Mammary epithelial cell (primary cell): ENCODE measurements at regions of chr2 and their contacts with region 1.

Region 1: GRCh38 chr2:219498280-219499057 is at the start of gene GMPPA:
- DNase-seq: peak; percentile 98
- H3K4me3 ChIP-seq: peak within 1 kb of the TSS; percentile 57 to 71 (median 65)
- H3K27ac ChIP-seq: peak within 1 kb of the TSS; percentile 53
- H3K4me1 ChIP-seq: peaks cover 18% of the 10 kb centered on the region
- H3K27me3 ChIP-seq: no peaks in the 10 kb centered on the region
- CTCF ChIP-seq: no peak
- total RNA-seq, gene GMPPA: 37.8 to 50.1 TPM

Region 2: DNA sequence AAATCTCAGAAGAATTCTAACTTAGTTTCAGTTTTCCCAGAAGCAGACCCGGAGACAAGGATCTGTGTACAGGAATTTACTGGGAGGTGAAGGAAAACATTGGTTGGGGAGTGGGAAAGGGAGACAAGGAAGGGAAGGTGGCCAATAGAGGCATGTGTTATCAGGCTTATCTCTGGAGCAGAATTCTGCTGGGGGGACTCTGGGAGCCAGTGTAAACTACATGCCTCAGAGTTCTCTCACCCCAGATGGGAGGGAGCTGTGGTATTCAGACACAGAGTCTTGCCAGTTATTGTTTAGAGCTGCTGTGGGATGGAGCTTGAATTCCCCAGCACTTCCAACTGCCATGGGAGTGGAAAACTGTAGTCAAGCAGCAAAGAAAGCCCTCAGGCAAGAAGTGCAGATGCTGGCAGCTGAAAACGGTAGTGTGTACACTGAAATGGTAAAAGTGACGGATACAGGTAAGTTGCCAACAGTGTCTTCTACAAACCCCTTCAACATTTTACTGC is 129.7 kb before region 1 on chr2:
- CTCF ChIA-PET with region 1: no interaction called
- dilution Hi-C with region 1: no loop called
- in situ Hi-C with region 1: no loop called
- intact Hi-C with region 1: no loop called
- DNase-seq: peak; percentile 60
- H3K4me3 ChIP-seq: no peak overlapping the region
- H3K27ac ChIP-seq: no peak overlapping the region
- H3K4me1 ChIP-seq: no peaks in the 10 kb centered on the region
- H3K27me3 ChIP-seq: no peaks in the 10 kb centered on the region
- CTCF ChIP-seq: no peak

Region 3: DNA sequence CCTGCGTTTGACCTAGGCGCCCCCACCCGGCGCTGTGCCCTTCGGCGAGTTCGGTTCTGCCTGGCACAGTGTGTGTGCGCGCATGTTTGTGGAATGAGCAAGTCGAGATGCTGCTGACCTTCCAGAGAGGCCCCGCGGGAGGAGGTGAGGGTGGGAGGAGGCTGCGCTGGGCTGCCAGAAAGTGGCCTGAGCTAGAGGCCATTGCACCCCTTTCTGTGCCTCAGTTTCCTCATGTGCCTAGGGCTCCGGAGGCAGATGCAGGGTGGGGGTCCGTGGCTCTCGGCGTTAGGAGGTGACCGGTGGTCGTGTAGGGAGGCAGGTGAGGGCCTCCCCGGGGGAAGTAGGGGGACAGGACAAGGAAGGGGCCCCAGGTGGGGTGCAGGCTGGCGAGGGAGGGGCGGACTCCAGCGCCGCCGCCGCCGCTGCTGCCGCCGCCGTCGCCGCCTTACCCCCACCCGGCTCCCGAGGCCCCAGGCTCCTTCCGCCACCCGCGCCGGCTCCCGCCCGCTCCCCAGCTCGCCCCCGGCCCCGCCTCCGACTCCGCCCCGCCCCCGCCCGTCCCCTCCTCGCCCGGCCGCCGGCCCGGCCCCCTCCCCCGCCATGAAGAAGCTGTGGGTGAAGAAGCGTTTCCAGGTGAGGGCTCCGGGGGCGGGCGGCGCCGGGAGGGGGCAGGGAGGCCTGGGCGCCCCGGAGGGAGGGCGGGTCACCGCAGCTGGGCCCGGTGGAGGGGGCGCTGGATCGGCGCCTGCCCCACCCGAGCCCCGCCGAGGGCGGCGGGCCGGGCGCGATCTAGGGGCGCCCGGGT is 56.8 kb before region 1 on chr2:
- CTCF ChIA-PET with region 1: no interaction called
- dilution Hi-C with region 1: no loop called
- in situ Hi-C with region 1: no loop called
- intact Hi-C with region 1: loop called (anchors 5 kb)
- DNase-seq: no peak
- H3K4me3 ChIP-seq: peak overlapping the region; percentile 40 to 63 (median 60)
- H3K27ac ChIP-seq: no peak overlapping the region
- H3K4me1 ChIP-seq: peaks cover 51% of the 10 kb centered on the region
- H3K27me3 ChIP-seq: no peaks in the 10 kb centered on the region
- CTCF ChIP-seq: no peak

Region 4: DNA sequence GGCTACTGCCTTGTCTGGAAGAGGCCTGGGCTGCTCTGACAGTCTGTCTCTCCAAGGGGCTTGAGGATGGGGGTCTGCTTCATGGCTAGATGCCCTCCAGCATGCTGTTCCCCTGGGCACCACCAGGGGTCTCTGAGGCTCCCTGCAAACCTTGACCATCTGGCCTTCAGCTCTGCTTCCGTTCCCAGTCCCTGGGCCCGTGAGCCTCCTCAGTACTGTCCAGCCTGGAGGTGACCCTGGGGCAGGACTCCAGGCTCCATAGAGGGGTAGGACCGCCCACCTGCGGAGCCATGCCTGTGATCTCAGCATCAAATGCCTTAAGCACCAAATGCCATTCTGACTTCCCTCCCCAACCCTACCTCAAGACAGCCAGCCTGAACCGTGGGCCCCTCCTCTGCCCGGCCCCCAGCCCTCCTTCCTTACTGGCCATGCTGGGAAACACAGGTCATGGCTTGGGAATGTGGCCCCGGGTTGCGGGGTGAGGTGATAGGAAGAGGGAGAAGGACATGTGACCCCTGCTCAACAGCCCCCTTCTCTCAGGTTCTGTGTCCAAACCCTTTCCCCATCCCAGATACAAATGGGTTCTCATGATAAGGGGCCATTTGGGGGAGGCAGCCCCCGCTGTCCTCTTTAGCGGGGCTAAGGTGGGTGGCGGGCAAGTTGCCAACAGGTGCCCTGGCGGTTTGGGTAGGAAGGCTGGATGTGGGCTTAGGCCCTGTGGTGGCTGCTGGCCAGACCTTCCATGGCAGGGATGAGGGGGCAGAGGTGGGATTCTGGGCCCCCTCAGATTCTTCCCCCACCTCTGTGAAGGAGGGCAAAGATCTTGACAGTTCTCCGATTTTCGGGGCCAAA is 38.8 kb before region 1 on chr2:
- CTCF ChIA-PET with region 1: no interaction called
- dilution Hi-C with region 1: no loop called
- in situ Hi-C with region 1: no loop called
- intact Hi-C with region 1: loop called (anchors 1 kb)
- DNase-seq: peak; percentile 30
- H3K4me3 ChIP-seq: no peak overlapping the region
- H3K27ac ChIP-seq: no peak overlapping the region
- H3K4me1 ChIP-seq: peaks cover 49% of the 10 kb centered on the region
- H3K27me3 ChIP-seq: no peaks in the 10 kb centered on the region
- CTCF ChIP-seq: peak; percentile 93 to 97

Region 5: DNA sequence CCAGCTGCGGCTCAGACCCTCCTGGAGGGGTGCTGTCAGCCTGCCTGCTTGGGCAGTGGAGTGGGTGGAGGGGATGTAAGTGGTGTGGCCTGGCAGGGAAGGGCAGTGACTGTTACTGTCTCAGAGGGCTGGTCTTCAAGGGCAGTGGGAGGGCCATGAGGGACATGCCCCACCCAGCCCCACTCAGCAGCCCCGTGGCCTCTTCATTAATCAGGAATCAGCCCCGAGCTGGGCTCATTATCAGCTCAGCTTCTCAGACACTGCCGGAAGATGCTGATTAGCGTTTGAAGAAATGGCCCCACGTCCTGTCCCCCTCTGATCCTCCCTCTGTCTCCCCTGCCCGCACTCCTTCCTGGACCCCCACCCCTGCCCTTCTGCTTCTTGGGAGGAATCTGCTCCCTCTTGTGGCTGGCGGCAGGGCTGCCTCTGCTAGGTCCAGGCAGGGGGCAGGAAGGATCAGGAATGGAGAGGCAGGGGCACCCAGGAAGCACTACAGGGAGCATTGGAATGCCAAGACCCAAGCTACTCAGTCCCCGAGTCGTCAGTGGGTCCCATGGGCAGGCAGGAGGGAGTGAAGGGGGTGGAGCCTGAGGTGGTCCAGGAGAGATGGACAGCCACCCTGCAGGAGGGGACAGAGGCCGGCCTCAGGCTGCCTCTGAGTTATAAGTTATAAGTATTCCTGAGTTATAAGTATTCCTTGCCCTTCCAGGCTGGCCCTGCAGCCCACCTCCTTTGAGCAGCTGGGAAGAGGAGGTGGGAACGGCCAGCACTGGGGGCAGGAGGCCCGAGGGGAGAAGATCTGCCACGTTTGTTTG is 22.8 kb after region 1 on chr2:
- CTCF ChIA-PET with region 1: interaction called, 4 read pairs
- dilution Hi-C with region 1: no loop called
- in situ Hi-C with region 1: no loop called
- intact Hi-C with region 1: loop called (anchors 2 kb)
- DNase-seq: no peak
- H3K4me3 ChIP-seq: no peak overlapping the region
- H3K27ac ChIP-seq: no peak overlapping the region
- H3K4me1 ChIP-seq: peaks cover 17% of the 10 kb centered on the region
- H3K27me3 ChIP-seq: peaks cover under 1% of the 10 kb centered on the region
- CTCF ChIP-seq: peak; percentile 52 to 72

Region 6: DNA sequence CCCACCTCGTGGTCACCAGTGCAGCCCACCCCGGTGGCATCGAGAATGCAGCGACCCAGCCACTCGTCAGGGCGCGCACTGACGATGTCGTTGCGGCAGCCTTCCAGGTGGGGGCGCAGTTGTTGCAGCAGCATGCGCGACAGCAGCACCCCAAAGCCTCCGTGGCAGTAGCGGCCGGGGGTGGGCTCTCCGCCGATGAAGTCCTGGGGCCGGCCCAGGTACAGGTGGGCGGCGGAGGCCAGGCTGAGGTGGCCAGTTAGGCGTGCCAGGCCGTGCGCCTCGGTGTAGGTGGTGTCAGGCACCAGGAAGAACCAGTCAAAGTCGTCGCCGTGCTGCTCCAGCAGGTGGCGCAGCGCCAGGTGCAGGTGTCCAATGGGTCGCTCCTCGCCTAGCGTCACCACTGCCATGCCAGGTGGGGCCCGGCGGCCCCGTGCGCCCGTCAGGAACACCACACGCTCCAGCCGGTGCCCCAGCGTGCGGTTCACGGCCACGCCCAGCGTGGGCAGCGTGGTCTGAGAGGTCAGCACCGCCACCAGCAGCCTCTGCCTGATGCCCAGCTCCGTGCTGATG is 43.2 kb after region 1 on chr2:
- CTCF ChIA-PET with region 1: no interaction called
- dilution Hi-C with region 1: no loop called
- in situ Hi-C with region 1: no loop called
- intact Hi-C with region 1: no loop called
- DNase-seq: peak; percentile 84
- H3K4me3 ChIP-seq: peak overlapping the region; percentile 74 to 88 (median 83)
- H3K27ac ChIP-seq: peak overlapping the region; percentile 78
- H3K4me1 ChIP-seq: peaks cover 48% of the 10 kb centered on the region
- H3K27me3 ChIP-seq: no peaks in the 10 kb centered on the region
- CTCF ChIP-seq: peak; percentile 79 to 91